Activated naive CD4-positive, alpha-beta T cell treated with anti-CD3 and anti-CD28 coated beads for 36 hours (primary cell): ENCODE measurements at regions of chr17 and their contacts with region 1.

Region 1: DNA sequence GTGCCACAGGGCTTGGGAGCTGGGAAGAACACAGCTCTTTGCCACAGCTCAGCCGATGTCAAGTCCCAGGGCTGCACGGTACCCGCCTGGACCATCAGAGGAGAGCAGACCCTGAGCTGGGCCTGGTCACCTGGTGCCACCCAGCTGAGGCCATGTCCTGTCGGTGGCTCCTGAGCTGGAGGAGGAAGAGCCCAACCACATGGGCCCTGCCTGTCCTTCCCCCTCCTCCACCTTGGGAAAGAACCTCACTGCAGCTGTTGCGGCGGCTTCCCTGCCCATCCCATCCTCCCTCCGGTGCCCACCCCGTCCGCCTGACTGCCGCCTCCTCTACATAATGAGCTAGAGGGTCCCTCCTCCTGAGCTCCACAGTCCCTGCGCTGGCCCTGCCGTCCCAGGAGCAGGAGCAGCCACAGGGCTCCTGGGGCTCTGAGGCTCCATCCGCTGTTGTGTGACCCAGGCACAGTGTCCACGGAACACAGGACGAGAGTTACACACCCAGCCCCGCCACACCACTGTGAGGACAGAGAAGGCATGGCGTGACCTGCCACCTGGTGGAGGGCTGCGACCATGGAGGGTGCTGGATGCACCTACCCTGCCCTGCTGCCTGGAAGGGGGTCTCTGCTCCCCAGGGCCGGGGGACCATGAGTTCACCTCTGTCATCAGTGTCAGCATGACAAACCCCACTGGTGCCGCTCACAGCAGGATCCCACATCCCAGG is 21.4 kb upstream of the CHMP6 start:
- DNase-seq: peak; percentile 72
- H3K4me3 Mint-ChIP-seq: no peak overlapping the region
- H3K27ac Mint-ChIP-seq: no peak overlapping the region
- H3K4me1 Mint-ChIP-seq: peaks cover 5% of the 10 kb centered on the region
- H3K27me3 Mint-ChIP-seq: no peaks in the 10 kb centered on the region

Region 2: GRCh38 chr17:80899402-80900268 is 70.6 kb before region 1 on chr17:
- CTCF ChIA-PET with region 1: no interaction called
- intact Hi-C with region 1: loop called (anchors 10 kb)
- DNase-seq: peak; percentile 93
- H3K4me3 Mint-ChIP-seq: no peak overlapping the region
- H3K27ac Mint-ChIP-seq: no peak overlapping the region
- H3K4me1 Mint-ChIP-seq: peaks cover 38% of the 10 kb centered on the region
- H3K27me3 Mint-ChIP-seq: no peaks in the 10 kb centered on the region